ENCODE measurements at regions of chr1 and their contacts with region 1.

Region 1: GRCh38 chr1:240455228-240455821 is 156.6 kb downstream of the GREM2 start:
- DNase-seq: peak in 1 of 2 experiments; percentile 29
- H3K4me3 ChIP-seq: no peak overlapping the region
- H3K4me3 Mint-ChIP-seq: no peak overlapping the region
- H3K27ac Mint-ChIP-seq: no peak overlapping the region
- H3K4me1 ChIP-seq: peaks cover 7% of the 10 kb centered on the region; the same call in 1 of the 2 replicates
- H3K4me1 Mint-ChIP-seq: no peaks in the 10 kb centered on the region
- H3K27me3 ChIP-seq: no peaks in the 10 kb centered on the region
- H3K27me3 Mint-ChIP-seq: no peaks in the 10 kb centered on the region
- CTCF ChIP-seq: peak; percentile 27 to 43

Region 2: GRCh38 chr1:240189386-240189989 is 265.8 kb before region 1 on chr1:
- CTCF ChIA-PET with region 1: no interaction called
- POLR2A ChIA-PET with region 1: no interaction called
- intact Hi-C with region 1: loop called (anchors 10 kb)
- DNase-seq: peak; percentile 35 to 45
- H3K4me3 ChIP-seq: no peak overlapping the region
- H3K4me3 Mint-ChIP-seq: no peak overlapping the region
- H3K27ac Mint-ChIP-seq: no peak overlapping the region
- H3K4me1 ChIP-seq: 0 out of 2 replicates have a peak, but pooled peaks cover 8% of the 10 kb centered on the region
- H3K4me1 Mint-ChIP-seq: peaks cover 5% of the 10 kb centered on the region
- H3K27me3 ChIP-seq: no peaks in the 10 kb centered on the region
- H3K27me3 Mint-ChIP-seq: peaks cover 11% of the 10 kb centered on the region
- CTCF ChIP-seq: peak; percentile 75 to 81

Region 3: DNA sequence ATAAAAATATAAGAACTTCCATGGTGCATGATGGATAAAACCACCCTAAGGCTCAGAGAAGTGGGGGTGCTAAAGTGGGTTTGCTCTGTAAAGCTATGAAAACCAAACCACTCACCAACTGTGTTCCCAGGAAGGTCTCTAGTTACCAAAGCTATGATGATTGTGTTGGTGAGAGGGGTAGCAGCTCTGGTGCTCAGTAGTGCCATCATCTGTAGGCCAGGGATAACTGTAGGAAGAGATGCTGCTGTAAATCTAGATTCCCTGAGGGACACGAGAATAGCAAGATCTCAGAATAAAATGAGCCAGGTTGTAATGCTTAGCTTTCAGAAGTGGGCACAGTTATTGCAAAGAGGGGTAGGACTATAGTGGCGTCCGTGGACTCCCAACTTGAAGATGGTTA is 32.2 kb after region 1 on chr1:
- CTCF ChIA-PET with region 1: no interaction called
- POLR2A ChIA-PET with region 1: no interaction called
- intact Hi-C with region 1: no loop called
- DNase-seq: no peak
- H3K4me3 ChIP-seq: no peak overlapping the region
- H3K4me3 Mint-ChIP-seq: no peak overlapping the region
- H3K27ac Mint-ChIP-seq: no peak overlapping the region
- H3K4me1 ChIP-seq: peaks cover 11% of the 10 kb centered on the region; the same call in 1 of the 2 replicates
- H3K4me1 Mint-ChIP-seq: peaks cover 47% of the 10 kb centered on the region
- H3K27me3 ChIP-seq: no peaks in the 10 kb centered on the region
- H3K27me3 Mint-ChIP-seq: no peaks in the 10 kb centered on the region
- CTCF ChIP-seq: no peak

Region 4: GRCh38 chr1:240602189-240602588 is 146.9 kb after region 1 on chr1:
- CTCF ChIA-PET with region 1: interaction called, 4 read pairs
- POLR2A ChIA-PET with region 1: no interaction called
- intact Hi-C with region 1: loop called (anchors 1 kb)
- DNase-seq: no peak
- H3K4me3 ChIP-seq: no peak overlapping the region
- H3K4me3 Mint-ChIP-seq: no peak overlapping the region
- H3K27ac Mint-ChIP-seq: no peak overlapping the region
- H3K4me1 ChIP-seq: peaks cover 4% of the 10 kb centered on the region; the same call in 1 of the 2 replicates
- H3K4me1 Mint-ChIP-seq: no peaks in the 10 kb centered on the region
- H3K27me3 ChIP-seq: no peaks in the 10 kb centered on the region
- H3K27me3 Mint-ChIP-seq: no peaks in the 10 kb centered on the region
- CTCF ChIP-seq: no peak

Region 5: GRCh38 chr1:240611619-240612480 is 156.5 kb after region 1 on chr1 and contains the start of gene GREM2:
- CTCF ChIA-PET with region 1: interaction called, 3 read pairs
- POLR2A ChIA-PET with region 1: no interaction called
- intact Hi-C with region 1: loop called (anchors 1 kb)
- DNase-seq: peak; percentile 36 to 51
- H3K4me3 ChIP-seq: peak within 1 kb of the TSS; percentile 40
- H3K4me3 Mint-ChIP-seq: peak within 1 kb of the TSS; percentile 84
- H3K27ac Mint-ChIP-seq: peak within 1 kb of the TSS; percentile 40
- H3K4me1 ChIP-seq: peaks cover 11% of the 10 kb centered on the region; the same call in 1 of the 2 replicates
- H3K4me1 Mint-ChIP-seq: peaks cover 14% of the 10 kb centered on the region
- H3K27me3 ChIP-seq: no peaks in the 10 kb centered on the region; the same call in 1 of the 2 replicates
- H3K27me3 Mint-ChIP-seq: peaks cover 3% of the 10 kb centered on the region
- CTCF ChIP-seq: no peak
- total RNA-seq, gene GREM2: 0.36 and 0.51 TPM in 2 replicates